A673 (cell line): ENCODE measurements at regions of chrX and their contacts with region 1.

Region 1: DNA sequence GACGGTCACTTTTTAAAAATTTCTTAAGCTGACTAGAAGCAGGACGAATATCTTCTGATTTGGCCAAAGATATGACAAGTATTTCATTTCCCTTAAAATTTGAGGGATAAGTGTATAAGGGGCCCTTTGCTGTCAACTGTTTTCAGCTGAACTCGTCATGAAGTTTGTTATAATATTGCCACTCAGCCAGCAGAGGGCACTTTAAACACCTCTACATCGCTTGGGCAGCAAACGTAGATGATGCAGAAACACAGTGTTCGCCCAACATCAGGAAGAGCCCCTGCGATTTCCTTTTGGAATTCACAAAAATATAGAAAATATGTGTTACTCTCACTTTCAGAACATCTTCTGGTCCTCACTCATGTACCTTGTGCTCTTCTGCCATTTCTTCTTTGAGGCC is 435.7 kb upstream of the FMR1 start:
- DNase-seq: peak; percentile 25
- H3K4me3 ChIP-seq: no peak overlapping the region
- H3K27ac ChIP-seq: no peak overlapping the region
- H3K4me1 ChIP-seq: no peaks in the 10 kb centered on the region
- H3K27me3 ChIP-seq: no peaks in the 10 kb centered on the region
- CTCF ChIP-seq: peak; percentile 46

Region 2: DNA sequence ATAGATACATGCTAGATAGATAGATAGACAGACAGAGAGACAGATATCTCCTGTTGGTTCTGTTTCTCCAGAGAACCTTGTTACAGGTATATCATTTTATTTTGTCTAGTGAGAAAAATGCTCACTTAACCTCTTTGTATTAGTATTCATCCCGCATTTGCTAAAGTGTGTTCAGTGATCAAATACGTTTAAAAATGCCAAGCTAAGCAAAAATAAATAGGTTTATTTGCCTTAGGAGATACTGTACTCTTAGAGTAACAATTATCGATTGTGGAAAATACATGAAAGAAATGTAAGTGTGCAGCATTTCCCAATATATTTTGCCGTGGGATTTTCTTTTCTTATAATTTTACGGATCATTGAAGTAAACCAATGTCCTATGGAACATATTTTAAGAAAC is 398.5 kb before region 1 on chrX:
- CTCF ChIA-PET with region 1: no interaction called
- POLR2A ChIA-PET with region 1: no interaction called
- intact Hi-C with region 1: no loop called
- DNase-seq: no peak
- H3K4me3 ChIP-seq: no peak overlapping the region
- H3K27ac ChIP-seq: no peak overlapping the region
- H3K4me1 ChIP-seq: no peaks in the 10 kb centered on the region
- H3K27me3 ChIP-seq: no peaks in the 10 kb centered on the region
- CTCF ChIP-seq: no peak

Region 3: GRCh38 chrX:147537172-147537571 is 61.2 kb after region 1 on chrX:
- CTCF ChIA-PET with region 1: no interaction called
- POLR2A ChIA-PET with region 1: no interaction called
- intact Hi-C with region 1: no loop called
- DNase-seq: no peak
- H3K4me3 ChIP-seq: no peak overlapping the region
- H3K27ac ChIP-seq: no peak overlapping the region
- H3K4me1 ChIP-seq: no peaks in the 10 kb centered on the region
- H3K27me3 ChIP-seq: no peaks in the 10 kb centered on the region
- CTCF ChIP-seq: no peak

Region 4: DNA sequence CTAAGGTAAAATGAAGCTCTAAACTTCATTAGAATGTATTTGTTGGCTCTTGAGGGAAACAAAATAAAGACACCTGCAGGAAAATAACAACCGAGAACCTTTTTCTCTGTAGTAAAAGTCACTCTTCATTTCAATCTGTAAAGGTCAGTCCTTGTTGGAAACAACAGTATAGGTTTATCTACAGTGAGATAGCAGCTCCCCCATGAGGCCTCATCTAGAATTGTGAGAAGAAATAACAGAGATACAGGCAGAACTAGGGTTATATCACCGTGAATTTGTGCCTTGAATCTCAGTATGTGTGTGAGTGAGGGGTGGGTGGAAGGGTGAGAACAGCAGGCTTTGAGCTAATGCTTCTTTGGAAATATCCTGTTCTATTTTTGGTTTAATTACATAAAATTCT is 327.9 kb after region 1 on chrX:
- CTCF ChIA-PET with region 1: interaction called, 3 read pairs
- POLR2A ChIA-PET with region 1: no interaction called
- intact Hi-C with region 1: loop called (anchors 5 kb)
- DNase-seq: peak; percentile 26
- H3K4me3 ChIP-seq: no peak overlapping the region
- H3K27ac ChIP-seq: no peak overlapping the region
- H3K4me1 ChIP-seq: no peaks in the 10 kb centered on the region
- H3K27me3 ChIP-seq: no peaks in the 10 kb centered on the region
- CTCF ChIP-seq: peak; percentile 61